Activated T-helper 1 cell treated with anti-CD3 and anti-CD28 coated beads, Interleukin-12 subunit alpha, Interleukin-12 subunit beta, Interleukin-2, Interleukin-4 antibody, amounts not matched to agents 30 ng/mL and 10 ng/mL and 1 ng/mL, durations not matched to agents 14 hours and 24 hours and 36 hours (primary cell): ENCODE measurements at regions of chr2 and their contacts with region 1.

Region 1: DNA sequence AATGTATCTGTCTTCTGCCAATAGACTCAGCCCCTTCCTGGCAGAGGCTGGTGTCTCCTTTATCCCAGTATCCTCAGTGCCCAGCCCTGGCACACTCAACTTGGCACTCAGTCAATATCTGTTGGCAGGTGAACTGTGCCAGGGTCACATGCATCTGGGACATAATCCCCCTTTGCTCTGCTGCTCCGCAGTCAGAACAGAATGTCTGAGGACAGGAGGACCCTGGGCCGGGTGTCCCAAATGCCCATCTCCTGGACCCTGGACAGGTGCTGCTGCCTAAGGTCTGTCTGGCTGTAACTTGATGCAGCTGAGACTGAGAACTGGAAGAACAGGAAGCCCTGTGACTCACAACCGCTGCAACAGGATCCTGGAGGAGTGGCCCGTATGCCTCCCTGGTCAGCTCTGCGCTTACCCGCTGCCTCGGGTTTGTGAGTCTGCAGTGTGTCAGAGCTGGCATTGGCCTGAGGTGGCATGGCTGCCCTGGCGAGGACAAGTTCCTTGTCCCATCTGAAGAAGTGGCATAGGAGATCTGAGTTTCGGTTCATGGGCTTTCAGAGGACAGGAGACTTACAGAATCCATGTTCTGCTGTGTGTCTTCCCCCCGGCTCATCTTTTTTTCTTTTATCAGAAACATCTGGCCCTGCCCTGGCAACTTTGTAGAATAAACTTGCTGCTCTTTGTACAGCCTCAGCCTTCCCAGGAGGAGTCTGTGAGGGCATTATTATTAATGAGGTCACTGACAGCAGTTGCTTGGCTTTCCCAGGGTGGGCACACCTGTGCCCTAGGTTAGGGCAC is 11.5 kb downstream of the HK2 start:
- DNase-seq: peak; percentile 26
- H3K4me3 Mint-ChIP-seq: peak overlapping the region; percentile 62
- H3K27ac Mint-ChIP-seq: peak overlapping the region; percentile 49
- H3K4me1 Mint-ChIP-seq: peaks cover 97% of the 10 kb centered on the region
- H3K27me3 Mint-ChIP-seq: no peaks in the 10 kb centered on the region

Region 2: GRCh38 chr2:74778381-74779264 is 66.8 kb before region 1 on chr2:
- intact Hi-C with region 1: loop called (anchors 5 kb)
- DNase-seq: no peak
- H3K4me3 Mint-ChIP-seq: no peak overlapping the region
- H3K27ac Mint-ChIP-seq: no peak overlapping the region
- H3K4me1 Mint-ChIP-seq: no peaks in the 10 kb centered on the region
- H3K27me3 Mint-ChIP-seq: peaks cover 7% of the 10 kb centered on the region

Region 3: GRCh38 chr2:74789271-74789670 is 56.1 kb before region 1 on chr2:
- intact Hi-C with region 1: no loop called
- DNase-seq: no peak
- H3K4me3 Mint-ChIP-seq: no peak overlapping the region
- H3K27ac Mint-ChIP-seq: no peak overlapping the region
- H3K4me1 Mint-ChIP-seq: no peaks in the 10 kb centered on the region
- H3K27me3 Mint-ChIP-seq: peaks cover 7% of the 10 kb centered on the region

Region 4: DNA sequence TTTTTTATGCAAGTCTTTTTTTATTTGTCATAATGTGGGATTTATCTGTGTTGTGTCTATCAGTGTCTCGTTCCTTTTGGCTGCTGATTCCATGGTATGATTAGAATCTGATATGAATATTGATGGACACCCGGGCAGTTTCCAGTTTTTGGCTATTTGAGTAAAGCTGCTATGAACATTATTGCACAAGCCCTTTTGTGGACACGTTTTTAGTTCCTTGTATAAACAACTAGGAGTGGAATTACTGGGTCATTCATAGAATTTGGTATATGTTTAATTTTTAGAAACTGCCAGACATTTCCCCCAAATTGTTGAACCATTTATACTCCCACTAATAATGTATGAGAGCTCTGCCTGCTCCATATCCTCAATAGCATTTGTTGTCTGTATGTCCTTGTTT is 15.1 kb after region 1 on chr2:
- intact Hi-C with region 1: loop called (anchors 2 kb)
- DNase-seq: no peak
- H3K4me3 Mint-ChIP-seq: no peak overlapping the region
- H3K27ac Mint-ChIP-seq: no peak overlapping the region
- H3K4me1 Mint-ChIP-seq: peaks cover 57% of the 10 kb centered on the region
- H3K27me3 Mint-ChIP-seq: no peaks in the 10 kb centered on the region